Lower leg skin (tissue), 4 donors: ENCODE measurements at regions of chr1 and their contacts with region 1.

Region 1: GRCh38 chr1:33633019-33633801 is 160.8 kb downstream of the ZSCAN20 start:
- DNase-seq: peak; percentile 84 to 95
- H3K4me3 ChIP-seq: no peak overlapping the region
- CTCF ChIP-seq: peak in 1 of 3 donors; percentile 40
- POLR2A ChIP-seq: no peak

Region 2: DNA sequence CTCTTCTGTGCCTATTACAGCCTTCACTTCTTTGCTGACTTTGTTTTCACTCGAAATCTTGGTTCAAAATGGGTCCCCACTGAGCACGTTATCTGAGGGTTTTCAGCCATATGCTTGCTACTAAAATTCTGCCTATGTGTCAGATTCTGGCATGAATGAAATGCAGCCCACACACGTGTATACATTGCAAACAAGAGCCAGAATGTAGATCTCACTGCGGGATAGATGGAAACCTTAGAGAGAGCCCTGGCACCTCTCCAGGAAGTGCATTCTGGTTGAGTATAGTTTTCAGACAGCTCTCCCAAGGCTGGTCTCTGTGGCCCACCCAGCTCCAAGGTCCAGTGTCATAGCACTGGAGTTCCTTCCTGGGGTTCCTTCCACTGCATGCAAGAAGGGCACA is 886.9 kb after region 1 on chr1:
- intact Hi-C with region 1: no loop called
- DNase-seq: no peak
- H3K4me3 ChIP-seq: no peak overlapping the region
- CTCF ChIP-seq: no peak
- POLR2A ChIP-seq: no peak

Region 3: DNA sequence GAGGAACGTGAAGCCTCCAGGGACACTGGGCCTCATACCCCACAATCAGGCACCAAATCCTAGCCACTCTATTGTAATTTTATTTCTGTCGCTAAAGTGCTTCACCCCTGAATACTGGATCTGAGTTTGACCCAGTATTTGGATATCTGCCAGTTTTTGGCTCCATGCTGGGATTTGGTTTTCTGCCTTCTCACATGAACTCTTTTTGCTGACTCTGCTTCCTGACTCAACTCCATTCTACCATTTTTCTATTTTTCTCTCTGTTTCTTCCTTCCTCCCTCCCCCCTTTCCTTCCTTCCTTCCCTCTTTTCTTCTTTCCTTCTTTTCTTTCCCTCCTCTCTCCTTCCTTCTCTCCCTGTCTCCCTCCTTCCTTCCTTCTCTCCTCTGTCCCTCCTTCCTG is 970.4 kb after region 1 on chr1:
- intact Hi-C with region 1: loop called (anchors 5 kb)
- DNase-seq: no peak
- H3K4me3 ChIP-seq: no peak overlapping the region
- CTCF ChIP-seq: no peak
- POLR2A ChIP-seq: no peak

Region 4: DNA sequence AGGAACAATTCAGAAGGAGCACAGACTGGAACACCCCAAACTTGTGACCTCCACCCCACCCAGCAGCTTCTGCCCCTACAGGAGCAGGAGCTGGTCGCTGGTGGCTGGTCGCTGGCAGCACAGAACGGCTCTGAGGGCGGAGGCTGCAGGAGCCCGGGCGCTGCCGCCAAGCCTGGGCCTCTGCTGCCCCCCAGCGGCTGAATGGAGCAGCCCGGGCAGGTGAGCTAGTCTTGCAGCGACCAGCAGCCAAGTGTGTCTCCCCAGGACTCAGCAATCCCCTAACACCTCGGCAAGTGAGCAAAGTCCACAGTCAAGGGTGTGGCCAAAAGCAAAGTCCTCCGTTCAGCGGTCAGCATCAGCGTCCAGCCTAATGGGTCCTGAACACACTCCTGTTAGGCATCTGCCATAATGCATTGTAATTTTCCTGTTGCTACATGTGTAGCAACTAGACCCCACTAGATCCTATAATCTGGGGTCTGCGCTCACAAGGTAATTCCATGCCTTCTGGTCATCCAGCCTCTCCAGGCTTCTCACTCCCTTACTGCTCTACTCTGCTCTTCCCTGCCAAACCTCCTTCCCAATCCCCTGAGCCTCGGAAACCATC is 1109.6 kb after region 1 on chr1:
- intact Hi-C with region 1: loop called (anchors 5 kb)
- DNase-seq: peak; percentile 55 to 92
- H3K4me3 ChIP-seq: no peak overlapping the region
- CTCF ChIP-seq: peak in 1 of 3 donors; percentile 31
- POLR2A ChIP-seq: no peak